HEK293 (cell line): ENCODE measurements at regions of chr20 and their contacts with region 1.

Region 1: DNA sequence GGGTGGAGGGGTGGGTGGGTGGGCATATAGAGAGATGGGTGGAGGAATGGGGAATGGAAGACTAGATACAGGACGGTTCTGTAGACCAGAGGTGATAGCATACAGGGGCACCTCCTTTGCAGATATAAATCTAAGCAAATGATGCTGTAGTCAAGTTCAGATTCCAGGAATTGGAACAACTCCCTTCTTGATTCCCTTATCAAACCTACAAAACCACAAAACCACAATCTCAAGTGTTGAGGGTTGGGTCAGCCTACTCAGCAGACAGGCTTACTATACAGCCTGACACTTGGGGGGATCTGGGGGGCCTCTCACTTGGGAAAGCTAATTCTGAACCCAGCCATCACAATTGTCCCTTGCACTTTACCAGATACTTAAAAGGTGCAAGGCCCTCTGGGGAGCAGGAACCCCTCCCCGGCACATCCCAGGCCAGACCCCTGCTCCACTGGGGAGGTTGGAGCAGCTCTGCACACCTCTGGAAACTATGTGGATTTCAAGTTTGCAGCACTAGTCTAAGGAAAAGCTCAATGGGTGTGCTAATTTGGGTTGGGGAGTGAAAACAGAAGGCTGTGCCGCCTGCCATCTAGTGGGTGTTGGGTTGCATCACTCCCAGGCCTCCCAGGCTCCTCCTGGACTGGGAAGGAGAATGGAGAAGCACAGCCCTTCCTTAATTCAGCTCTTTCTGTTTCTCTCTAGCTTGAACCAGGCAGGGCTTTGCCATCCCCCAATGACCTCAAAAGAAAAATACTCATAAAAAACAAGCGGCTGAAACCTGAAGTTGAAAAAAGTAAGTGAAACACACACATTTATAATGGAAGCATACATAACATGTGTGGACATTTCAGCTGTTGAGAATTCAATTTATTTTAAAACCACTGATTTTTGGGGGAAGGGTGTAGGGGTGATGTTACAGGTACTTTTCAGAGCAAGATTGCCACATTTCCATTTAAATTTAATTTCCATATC is 121.2 kb upstream of the LAMP5 start:
- H3K4me3 ChIP-seq: no peak overlapping the region
- H3K27ac ChIP-seq: no peak overlapping the region
- H3K4me1 ChIP-seq: peaks cover 3% of the 10 kb centered on the region; the same call in 1 of the 2 replicates
- CTCF ChIP-seq: peak; percentile 44; the same call in 1 of the 2 replicates

Region 2: GRCh38 chr20:8756410-8756809 is 636.8 kb before region 1 on chr20:
- CTCF ChIA-PET with region 1: interaction called, 14 read pairs
- POLR2A ChIA-PET with region 1: no interaction called
- H3K4me3 ChIP-seq: no peak overlapping the region
- H3K27ac ChIP-seq: no peak overlapping the region
- H3K4me1 ChIP-seq: no peaks in the 10 kb centered on the region
- CTCF ChIP-seq: no peak

Region 3: DNA sequence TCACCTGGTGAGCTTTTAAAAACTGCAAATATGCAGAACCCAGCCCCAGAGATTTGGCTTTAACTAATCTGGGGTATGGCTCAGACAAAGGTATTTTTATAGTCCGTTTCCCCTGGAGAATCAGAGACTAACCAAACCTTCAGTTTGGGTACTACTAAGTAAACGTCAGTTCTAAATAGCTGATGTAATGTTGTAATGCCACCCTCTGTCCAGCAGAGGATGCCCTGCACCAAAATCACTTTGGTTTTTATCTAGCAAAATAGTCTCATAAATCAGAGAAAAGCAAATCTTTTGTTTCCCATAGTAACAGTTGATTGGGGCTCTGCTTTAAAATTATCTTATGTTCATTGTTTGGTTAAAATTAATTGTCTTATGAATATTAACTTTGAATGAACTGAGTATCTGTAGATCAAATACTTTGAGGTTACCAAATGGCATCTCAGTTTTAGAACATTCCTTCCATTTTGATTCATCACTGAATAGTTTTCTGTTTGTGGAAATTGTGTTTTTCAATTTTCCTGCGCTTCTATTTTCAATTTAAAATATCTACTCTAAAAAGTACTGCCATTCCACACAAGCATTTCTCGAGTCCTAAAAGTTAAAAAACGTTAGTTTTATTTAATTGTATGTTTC is 602.6 kb before region 1 on chr20:
- CTCF ChIA-PET with region 1: interaction called, 37 read pairs
- POLR2A ChIA-PET with region 1: no interaction called
- H3K4me3 ChIP-seq: no peak overlapping the region
- H3K27ac ChIP-seq: no peak overlapping the region
- H3K4me1 ChIP-seq: no peaks in the 10 kb centered on the region
- CTCF ChIP-seq: peak; percentile 31; the same call in 1 of the 2 replicates

Region 4: DNA sequence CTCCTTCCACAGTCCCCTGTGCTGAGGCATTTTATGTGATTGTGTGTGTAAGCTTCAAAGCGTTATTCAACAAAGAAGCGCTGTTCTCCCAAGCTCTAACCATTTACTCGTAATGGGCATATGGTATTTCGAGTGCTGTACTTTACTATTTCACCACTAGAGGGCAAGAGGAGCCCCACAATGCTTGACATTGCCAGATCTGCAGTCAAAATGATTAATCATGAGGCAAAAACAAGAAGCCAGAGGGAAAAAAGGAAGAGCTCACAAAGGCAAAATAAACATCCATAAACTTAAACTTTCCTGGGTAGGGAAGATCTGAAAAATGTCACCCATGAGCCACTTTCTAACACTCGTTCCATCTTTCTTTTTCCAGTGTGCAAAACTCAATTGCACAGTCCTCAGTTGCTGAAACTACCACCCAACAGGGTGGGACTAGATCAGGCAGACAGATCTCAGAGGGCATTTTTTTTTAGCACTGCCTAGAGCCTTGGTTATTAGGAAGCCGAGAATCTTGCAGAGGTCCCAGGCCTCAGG is 539.3 kb before region 1 on chr20:
- CTCF ChIA-PET with region 1: interaction called, 18 read pairs
- POLR2A ChIA-PET with region 1: no interaction called
- H3K4me3 ChIP-seq: no peak overlapping the region
- H3K27ac ChIP-seq: no peak overlapping the region
- H3K4me1 ChIP-seq: peaks cover 3% of the 10 kb centered on the region; the same call in 1 of the 2 replicates
- CTCF ChIP-seq: no peak

Region 5: DNA sequence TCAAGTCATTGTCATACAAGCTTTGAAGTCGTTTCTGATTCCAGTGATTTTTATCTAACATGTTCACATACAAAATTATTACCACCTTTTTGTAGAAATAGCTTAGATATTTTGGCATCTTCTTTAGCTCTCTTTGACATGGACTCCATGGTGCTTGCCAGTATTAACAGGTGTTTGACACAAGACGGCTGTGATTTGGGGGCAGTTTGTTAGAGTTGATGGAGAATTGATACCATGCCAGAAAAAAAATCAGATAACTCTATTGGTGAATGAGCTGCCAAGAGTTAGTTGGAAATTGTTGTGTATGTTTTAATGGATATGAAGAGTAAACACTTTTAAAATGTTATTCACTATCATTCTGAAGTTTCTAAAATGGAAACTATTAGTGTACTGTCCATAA is 25.4 kb before region 1 on chr20:
- CTCF ChIA-PET with region 1: interaction called, 10 read pairs
- POLR2A ChIA-PET with region 1: no interaction called
- H3K4me3 ChIP-seq: no peak overlapping the region
- H3K27ac ChIP-seq: no peak overlapping the region
- H3K4me1 ChIP-seq: no peaks in the 10 kb centered on the region
- CTCF ChIP-seq: no peak

Region 6: DNA sequence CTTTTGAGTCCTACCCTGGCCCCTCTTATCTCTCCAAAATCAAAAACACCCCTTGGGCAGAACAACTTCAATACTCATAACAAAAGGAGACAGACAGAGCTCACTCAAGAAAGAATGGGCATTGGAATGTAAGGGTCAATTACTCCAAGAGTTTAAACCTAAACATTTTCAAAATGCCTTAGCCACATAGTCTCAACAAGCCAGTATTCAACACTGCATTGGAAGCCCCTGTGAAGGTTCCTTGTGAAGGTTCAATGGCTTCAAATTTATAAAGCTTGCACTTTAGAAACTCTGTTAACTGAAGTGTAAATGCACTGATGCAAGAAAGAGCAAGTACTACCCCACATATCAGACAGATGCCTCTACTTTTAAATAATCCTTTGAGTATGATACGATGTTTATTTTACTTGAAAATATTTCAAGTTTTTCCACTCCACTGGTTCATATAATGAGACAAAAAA is 17.9 kb before region 1 on chr20:
- CTCF ChIA-PET with region 1: interaction called, 11 read pairs
- POLR2A ChIA-PET with region 1: no interaction called
- H3K4me3 ChIP-seq: no peak overlapping the region
- H3K27ac ChIP-seq: no peak overlapping the region
- H3K4me1 ChIP-seq: peaks cover 16% of the 10 kb centered on the region
- CTCF ChIP-seq: no peak

Region 7: DNA sequence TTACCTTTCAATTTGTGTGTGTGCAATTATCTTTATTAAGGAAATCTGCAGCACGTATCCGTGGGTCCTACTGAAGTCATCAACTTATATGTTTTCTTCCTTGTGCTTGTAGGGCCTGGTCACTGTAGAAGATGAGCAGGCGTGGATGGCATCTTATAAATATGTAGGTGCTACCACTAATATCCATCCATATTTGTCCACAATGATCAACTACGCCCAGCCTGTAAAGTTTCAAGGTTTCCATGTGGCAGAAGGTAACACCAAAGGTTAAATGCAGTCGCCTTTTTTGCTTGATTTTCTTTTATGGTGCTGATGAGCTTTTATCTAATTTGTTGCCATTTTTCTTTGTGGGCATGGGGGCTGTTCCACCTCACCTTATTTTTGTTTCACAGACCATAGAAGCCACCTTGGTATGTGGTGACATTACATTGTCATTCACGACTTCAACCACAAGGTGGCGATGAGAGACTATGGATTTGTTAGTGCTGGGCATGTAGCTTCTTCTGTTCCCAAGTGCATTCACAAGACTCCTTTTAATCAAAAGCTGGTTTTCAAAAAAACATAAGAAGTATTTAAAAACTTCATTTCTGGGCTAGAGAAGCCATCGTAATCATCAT is 14.7 kb after region 1 on chr20:
- CTCF ChIA-PET with region 1: interaction called, 12 read pairs
- POLR2A ChIA-PET with region 1: no interaction called
- H3K4me3 ChIP-seq: no peak overlapping the region
- H3K27ac ChIP-seq: no peak overlapping the region
- H3K4me1 ChIP-seq: no peaks in the 10 kb centered on the region
- CTCF ChIP-seq: peak; percentile 32; the same call in 1 of the 2 replicates

Region 8: DNA sequence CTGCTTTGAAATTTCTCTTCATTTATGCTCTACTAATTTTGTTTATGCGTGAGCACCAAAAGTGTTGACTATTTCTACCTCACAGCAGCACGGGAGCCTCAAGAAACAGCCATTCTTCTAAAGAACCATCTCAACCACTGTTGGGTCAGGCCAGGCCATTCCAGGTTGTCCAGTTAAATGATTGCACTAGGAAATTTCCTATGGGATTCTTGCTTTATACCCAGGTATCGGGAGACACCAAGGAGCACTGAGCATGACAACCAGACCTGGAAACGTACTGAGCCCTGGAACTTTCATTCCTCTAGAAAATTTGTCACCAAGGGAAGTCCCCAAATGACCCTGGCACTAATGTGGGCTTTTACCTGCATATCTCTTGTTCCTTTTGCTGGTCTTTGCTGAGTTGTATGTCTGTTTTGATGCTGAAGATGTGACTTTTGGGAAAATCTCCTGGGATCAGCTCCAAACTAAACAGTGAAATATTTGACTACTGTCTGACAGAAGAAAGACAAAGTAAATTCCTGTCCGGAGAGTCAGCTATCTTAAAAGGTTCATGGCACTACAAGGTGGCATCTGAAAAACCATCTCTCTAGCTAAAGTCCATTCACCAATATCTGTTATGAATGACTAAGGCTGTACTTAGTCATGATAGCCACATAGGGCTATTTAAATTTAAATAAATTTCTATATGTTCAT is 895.9 kb after region 1 on chr20:
- CTCF ChIA-PET with region 1: no interaction called
- POLR2A ChIA-PET with region 1: no interaction called
- H3K4me3 ChIP-seq: no peak overlapping the region
- H3K27ac ChIP-seq: no peak overlapping the region
- H3K4me1 ChIP-seq: no peaks in the 10 kb centered on the region
- CTCF ChIP-seq: no peak